ENCODE measurements at regions of chr12 and their contacts with region 1.

Region 1: DNA sequence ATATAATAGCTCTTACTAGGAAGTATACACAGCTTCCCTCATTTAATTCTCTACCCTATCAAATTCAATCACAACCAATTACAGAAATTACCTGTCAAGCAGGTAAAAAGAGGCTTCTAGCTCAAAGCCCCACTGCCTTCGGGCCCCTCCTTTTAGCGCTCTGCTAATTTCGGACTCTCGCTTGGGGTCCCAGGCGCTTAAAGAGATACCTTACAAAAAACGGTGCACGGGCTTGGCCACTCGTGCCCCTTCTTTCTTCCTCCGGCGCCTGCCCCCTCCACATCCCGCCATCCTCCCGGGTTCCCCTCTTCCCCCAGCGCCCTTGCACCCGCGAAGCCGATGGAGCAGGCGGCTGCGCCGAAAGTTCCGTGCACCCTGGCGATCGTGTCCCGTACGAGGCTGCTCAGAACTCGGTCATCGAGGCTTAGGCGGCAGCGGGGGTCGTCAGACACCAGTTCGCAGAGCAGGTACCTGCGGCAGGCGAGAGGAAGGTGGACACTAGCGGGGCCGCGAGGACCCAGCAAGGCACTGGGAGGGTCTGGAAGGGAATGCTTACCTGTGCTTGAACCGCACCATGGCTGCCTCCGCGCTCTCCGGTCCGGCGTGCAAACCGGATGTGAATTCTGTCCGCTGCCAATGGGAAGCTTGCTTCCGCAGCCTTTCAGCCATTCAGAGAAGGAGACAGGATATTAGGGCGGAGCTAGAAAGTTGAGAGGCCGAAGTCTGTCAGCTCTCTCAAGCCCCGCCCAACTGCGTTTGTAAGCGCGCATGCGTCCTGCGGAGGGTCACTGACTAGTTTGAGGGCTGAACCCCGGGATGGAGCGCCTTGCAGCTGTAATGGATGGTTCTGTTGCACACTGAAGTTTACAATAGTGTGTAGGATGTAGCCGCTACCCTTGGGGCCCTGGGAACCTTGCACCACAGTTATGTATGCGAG is at the start of gene POP5:
- DNase-seq: peak; percentile 97 to 99 (median 98)
- ATAC-seq: peak; percentile 95
- H3K4me3 ChIP-seq: peak within 1 kb of the TSS; percentile 68 to 71
- H3K27ac ChIP-seq: peak within 1 kb of the TSS; percentile 50 to 81 (median 68)
- H3K4me1 ChIP-seq: peaks cover 38% of the 10 kb centered on the region
- H3K27me3 ChIP-seq: no peaks in the 10 kb centered on the region
- CTCF ChIP-seq: no peak
- POLR2A ChIP-seq: peak; percentile 47 to 85 (median 83)
- total RNA-seq, gene POP5: 23.9 to 45.8 TPM

Region 2: DNA sequence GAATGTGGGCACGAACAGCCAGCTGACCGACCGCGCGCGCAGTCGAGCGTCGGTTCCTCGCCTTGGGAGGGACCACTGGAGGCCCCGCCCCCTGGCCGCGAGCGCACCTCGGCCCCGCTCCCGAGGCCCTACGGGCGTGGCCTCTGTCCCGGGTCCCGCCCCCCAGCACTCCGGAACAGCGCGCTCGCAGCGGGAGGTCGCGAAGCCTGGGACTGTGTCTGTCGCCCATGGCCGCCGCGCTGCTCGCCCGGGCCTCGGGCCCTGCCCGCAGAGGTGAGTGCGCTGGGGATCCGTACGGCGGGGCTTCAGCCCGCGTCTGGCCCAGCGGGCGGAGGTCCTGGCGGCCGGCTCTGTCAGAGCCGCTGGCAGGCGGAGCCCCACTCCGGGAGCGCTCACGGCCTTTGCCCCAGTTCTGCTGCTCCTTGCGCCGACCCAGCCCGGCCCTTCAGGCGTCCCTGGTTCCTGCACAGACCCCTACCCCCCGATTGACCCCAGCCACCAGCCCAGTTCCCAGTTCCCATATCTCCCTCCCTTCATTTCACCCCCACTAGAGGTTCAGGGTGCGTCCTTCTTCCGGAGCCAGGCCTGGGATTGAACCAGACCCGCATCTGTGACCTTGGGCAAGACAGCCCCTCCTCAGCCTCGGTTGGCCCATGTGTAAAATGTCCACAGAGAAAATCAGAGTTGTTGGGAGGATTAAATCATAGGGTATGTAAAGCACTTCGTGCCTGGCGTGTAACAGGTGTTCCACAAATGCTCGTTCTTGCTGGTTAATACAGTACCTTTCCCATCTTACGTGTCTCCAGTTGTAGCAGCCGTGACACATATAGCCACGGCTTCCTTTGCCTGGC is 144.8 kb after region 1 on chr12 and contains the start of gene ACADS:
- intact Hi-C with region 1: loop called (anchors 10 kb)
- DNase-seq: peak; percentile 92 to 96 (median 94)
- ATAC-seq: peak; percentile 98
- H3K4me3 ChIP-seq: peak within 1 kb of the TSS; percentile 69 to 71
- H3K27ac ChIP-seq: peak within 1 kb of the TSS; percentile 48 to 87 (median 82)
- H3K4me1 ChIP-seq: peaks cover 19% of the 10 kb centered on the region
- H3K27me3 ChIP-seq: no peaks in the 10 kb centered on the region
- CTCF ChIP-seq: peak in 1 of 7 experiments; percentile 16
- POLR2A ChIP-seq: peak; percentile 77 to 82 (median 80)
- total RNA-seq, gene ACADS: 33.5 to 55.0 TPM

Region 3: GRCh38 chr12:121107691-121108090 is 526.6 kb after region 1 on chr12:
- intact Hi-C with region 1: loop called (anchors 10 kb)
- DNase-seq: no peak
- ATAC-seq: no peak
- H3K4me3 ChIP-seq: no peak overlapping the region
- H3K27ac ChIP-seq: no peak overlapping the region
- H3K4me1 ChIP-seq: no peaks in the 10 kb centered on the region
- H3K27me3 ChIP-seq: no peaks in the 10 kb centered on the region
- CTCF ChIP-seq: no peak
- POLR2A ChIP-seq: no peak

Measured in body of pancreas (tissue), 4 donors.